ENCODE measurements at regions of chr20 and their contacts with region 1.

Region 1: GRCh38 chr20:46333161-46333991 is 25.1 kb upstream of the CDH22 start:
- DNase-seq: peak; percentile 48 to 74
- ATAC-seq: peak in 1 of 2 donors; percentile 1
- H3K4me3 ChIP-seq: no peak overlapping the region
- H3K27ac ChIP-seq: peak overlapping the region in 1 of 4 donors; percentile 43
- H3K4me1 ChIP-seq: peaks cover 10 to 12% of the 10 kb centered on the region in 2 donors
- H3K27me3 ChIP-seq: peaks cover 0 to 4% (median 0%) of the 10 kb centered on the region in 3 donors
- CTCF ChIP-seq: no peak
- POLR2A ChIP-seq: no peak

Region 2: DNA sequence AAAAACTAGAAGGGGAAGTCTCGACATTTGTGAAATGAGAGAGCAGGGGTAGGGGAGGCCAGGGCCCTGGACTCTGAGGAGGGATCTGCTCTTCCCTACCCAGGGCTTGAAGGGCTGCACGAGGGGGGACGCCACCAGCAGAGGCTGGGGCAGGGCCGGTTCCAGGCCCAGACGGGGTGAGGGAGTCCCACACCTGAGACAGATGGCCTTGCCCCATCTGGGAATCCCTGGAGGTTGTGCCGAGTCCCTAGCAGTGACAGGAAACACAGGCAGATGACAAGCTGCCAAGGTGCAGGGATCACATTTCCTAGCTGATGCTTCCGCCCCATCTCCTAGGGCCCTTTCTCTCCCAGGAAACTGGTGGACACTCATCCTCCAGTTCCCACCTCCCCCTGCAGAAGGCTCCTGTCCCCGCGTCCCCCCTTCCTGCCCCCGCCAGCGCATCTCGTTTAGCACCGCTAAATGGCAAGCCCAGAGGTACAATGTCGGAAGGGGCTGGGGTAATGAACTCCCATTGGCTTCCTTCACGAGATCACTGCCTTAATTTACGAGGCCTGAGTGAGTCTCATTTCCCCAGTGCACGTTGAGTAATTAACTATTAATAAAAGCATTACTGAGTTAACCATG is 10.1 kb after region 1 on chr20:
- in situ Hi-C with region 1: no loop called
- intact Hi-C with region 1: loop called (anchors 1 kb)
- DNase-seq: peak; percentile 54 to 55
- ATAC-seq: peak; percentile 74 to 77
- H3K4me3 ChIP-seq: peak overlapping the region in 3 of 4 donors; percentile 11 to 28 (median 26)
- H3K27ac ChIP-seq: peak overlapping the region; percentile 49 to 81 (median 78)
- H3K4me1 ChIP-seq: peaks cover 8 to 9% of the 10 kb centered on the region in 2 donors
- H3K27me3 ChIP-seq: peaks cover 25 to 36% (median 31%) of the 10 kb centered on the region in 3 donors
- CTCF ChIP-seq: no peak
- POLR2A ChIP-seq: no peak

Region 3: GRCh38 chr20:46363800-46364634 is 30.6 kb after region 1 on chr20:
- in situ Hi-C with region 1: no loop called
- intact Hi-C with region 1: no loop called
- DNase-seq: peak; percentile 79 to 80
- ATAC-seq: peak; percentile 89 to 92
- H3K4me3 ChIP-seq: peak overlapping the region; percentile 87 to 100 (median 93)
- H3K27ac ChIP-seq: peak overlapping the region; percentile 94 to 100 (median 98)
- H3K4me1 ChIP-seq: peaks cover 50 to 51% of the 10 kb centered on the region in 2 donors
- H3K27me3 ChIP-seq: no peaks in the 10 kb centered on the region
- CTCF ChIP-seq: no peak
- POLR2A ChIP-seq: peak; percentile 90

Measured in gastrocnemius medialis (tissue), 4 donors.